Vagina (tissue), 2 donors: ENCODE measurements at regions of chr19 and their contacts with region 1.

Region 1: GRCh38 chr19:42242512-42243344 is at the start of gene GSK3A:
- DNase-seq: peak; percentile 99 to 100
- H3K4me3 ChIP-seq: peak within 1 kb of the TSS; percentile 63 to 89
- H3K27ac ChIP-seq: peak within 1 kb of the TSS; percentile 87
- H3K4me1 ChIP-seq: peaks cover 57% of the 10 kb centered on the region
- H3K27me3 ChIP-seq: no peaks in the 10 kb centered on the region
- CTCF ChIP-seq: peak in 1 of 3 experiments; percentile 5
- POLR2A ChIP-seq: peak in 1 of 2 donors; percentile 85
- total RNA-seq, gene GSK3A: 21.1 TPM

Region 2: GRCh38 chr19:42092350-42092749 is 150.4 kb before region 1 on chr19:
- intact Hi-C with region 1: no loop called
- DNase-seq: no peak
- H3K4me3 ChIP-seq: no peak overlapping the region
- H3K27ac ChIP-seq: no peak overlapping the region
- H3K4me1 ChIP-seq: peaks cover 14% of the 10 kb centered on the region
- H3K27me3 ChIP-seq: no peaks in the 10 kb centered on the region
- CTCF ChIP-seq: peak in 1 of 3 experiments; percentile 14
- POLR2A ChIP-seq: no peak

Region 3: DNA sequence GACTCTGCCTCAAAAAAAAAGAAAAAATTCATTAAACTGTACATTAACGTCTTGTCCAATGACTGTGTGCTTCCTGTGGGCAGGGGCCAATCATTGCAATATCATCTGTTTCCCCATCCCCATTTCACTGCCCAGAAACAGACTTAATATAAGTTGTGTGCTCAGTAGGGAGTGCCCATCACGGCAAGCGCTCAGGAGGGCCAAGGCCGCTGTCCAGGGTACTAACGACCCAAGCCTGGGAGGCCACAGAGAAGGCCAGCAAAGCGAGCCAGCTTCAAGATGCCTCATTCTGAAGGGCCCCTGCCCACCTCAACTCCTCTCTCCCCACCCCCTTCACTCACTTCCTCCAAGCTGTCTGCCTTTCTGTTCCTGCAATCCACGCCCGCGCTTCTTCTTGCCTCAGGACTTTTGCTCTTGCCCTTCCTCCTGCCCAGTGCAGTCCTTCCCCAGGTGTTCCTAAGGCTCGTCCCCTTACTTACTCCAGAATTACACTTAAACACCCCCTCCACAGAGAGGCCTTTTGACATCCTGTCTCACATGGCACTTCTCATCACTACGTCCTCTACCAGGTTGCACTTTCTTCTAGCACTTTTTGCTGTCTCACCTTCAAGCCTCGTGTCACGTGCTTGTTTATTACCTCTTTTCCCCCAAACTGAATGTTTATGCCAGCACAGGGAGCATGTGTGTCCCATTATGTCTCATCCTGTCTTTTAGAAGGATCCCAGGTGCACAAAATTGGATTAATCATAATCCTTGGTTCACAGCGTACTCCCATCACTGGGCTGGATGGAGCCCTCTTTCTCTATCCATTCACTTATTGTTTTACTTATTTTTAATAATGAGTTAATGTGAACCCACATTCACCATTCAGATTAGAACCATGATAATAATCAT is 99.1 kb before region 1 on chr19:
- intact Hi-C with region 1: no loop called
- DNase-seq: no peak
- H3K4me3 ChIP-seq: no peak overlapping the region
- H3K27ac ChIP-seq: no peak overlapping the region
- H3K4me1 ChIP-seq: no peaks in the 10 kb centered on the region
- H3K27me3 ChIP-seq: no peaks in the 10 kb centered on the region
- CTCF ChIP-seq: no peak
- POLR2A ChIP-seq: no peak

Region 4: GRCh38 chr19:42207767-42208271 is 34.9 kb before region 1 on chr19:
- intact Hi-C with region 1: loop called (anchors 2 kb)
- DNase-seq: no peak
- H3K4me3 ChIP-seq: no peak overlapping the region
- H3K27ac ChIP-seq: peak overlapping the region; percentile 44
- H3K4me1 ChIP-seq: peaks cover 28% of the 10 kb centered on the region
- H3K27me3 ChIP-seq: no peaks in the 10 kb centered on the region
- CTCF ChIP-seq: no peak
- POLR2A ChIP-seq: no peak

Region 5: DNA sequence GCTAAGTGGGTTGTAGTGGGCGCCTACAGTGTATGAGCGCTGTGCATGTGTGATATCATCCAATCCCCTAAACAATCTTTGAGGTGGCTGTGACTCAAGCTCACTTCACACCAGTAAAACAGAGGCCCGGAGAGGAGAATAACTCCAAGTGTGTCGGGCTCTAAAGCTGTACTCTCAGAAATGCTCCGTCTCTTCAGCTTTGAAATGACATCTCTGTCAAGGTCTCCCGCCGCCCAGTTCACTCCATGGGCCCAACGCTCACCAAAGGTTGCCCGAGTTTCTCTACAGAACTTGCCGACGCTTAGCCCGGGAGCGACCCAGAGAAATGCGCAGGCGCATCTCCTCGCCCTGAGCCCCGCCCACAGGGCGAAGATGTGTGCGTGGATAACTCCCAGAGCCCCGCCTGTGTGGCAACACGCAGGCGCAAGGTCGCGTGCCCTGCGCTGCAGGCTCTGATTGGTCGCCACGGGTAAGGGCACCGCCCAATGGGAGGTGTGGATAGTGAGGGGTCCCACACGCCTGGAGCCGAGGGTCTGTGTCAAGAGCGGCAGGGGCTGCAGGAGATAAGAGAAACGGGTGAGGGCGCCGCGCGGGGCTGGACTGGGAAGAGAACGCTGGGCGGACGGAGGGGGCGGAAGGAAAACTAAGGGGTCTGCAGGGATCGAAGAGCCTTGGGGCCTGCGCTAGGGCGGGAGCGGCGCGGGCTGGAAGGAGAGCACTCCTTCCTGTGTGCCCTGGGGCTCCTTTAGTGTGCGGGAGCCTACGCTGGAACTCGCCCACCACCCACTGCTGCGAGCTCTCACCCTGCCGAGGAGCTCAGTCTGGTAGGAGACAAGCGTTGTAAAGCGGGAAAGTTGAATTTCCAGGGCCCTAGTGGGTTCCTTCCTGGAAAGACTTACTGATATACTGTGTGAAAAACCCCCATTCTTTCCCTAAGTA is 22.6 kb before region 1 on chr19 and contains the start of gene ZNF526:
- intact Hi-C with region 1: loop called (anchors 2 kb)
- DNase-seq: peak in 1 of 2 donors; percentile 98
- H3K4me3 ChIP-seq: peak within 1 kb of the TSS; percentile 77 to 93
- H3K27ac ChIP-seq: peak within 1 kb of the TSS; percentile 90
- H3K4me1 ChIP-seq: peaks cover 65% of the 10 kb centered on the region
- H3K27me3 ChIP-seq: no peaks in the 10 kb centered on the region
- CTCF ChIP-seq: peak in 1 of 3 experiments; percentile 5
- POLR2A ChIP-seq: peak in 1 of 2 donors; percentile 76
- total RNA-seq, gene ZNF526: 6.1 TPM

Region 6: DNA sequence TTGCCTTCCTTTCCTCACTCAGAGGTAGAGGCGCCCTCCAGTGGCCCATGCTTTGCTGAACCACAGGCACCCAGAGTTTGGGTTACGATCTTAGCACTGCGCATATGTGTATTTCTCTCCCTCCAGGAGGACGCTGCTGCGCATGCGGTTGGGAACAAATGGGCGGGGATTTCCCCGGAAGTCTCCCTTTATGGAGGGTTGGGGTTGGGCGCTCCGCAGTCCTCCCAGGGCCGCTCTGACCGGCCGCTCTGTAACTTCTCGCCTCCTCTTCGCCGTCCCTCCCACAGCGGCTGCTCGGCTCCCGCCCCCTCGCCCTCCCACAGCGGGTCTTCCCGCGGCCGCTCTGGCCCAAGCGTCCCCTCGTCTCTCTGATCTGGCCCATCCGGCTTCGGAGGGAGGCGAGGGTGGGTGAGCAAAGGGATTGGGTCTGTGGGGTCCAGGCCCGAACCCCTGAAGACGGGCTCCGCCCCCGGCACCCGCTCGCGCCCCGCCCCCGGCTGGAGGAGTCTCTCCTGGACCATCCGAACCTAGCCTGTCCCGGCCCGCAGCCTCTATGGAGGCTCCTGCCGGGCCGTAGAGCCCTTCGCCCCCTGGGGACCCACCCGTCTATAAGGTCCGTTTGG is 82.7 kb after region 1 on chr19 and contains the start of gene MEGF8:
- intact Hi-C with region 1: loop called (anchors 1 kb)
- DNase-seq: peak; percentile 97 to 98
- H3K4me3 ChIP-seq: peak within 1 kb of the TSS; percentile 60 to 78
- H3K27ac ChIP-seq: peak within 1 kb of the TSS; percentile 79
- H3K4me1 ChIP-seq: peaks cover 45% of the 10 kb centered on the region
- H3K27me3 ChIP-seq: peaks cover 14% of the 10 kb centered on the region
- CTCF ChIP-seq: peak; percentile 62 to 84 (median 65)
- POLR2A ChIP-seq: no peak
- total RNA-seq, gene MEGF8: 13.5 TPM

Region 7: GRCh38 chr19:42563352-42564210 is 320.9 kb after region 1 on chr19:
- intact Hi-C with region 1: no loop called
- DNase-seq: no peak
- H3K4me3 ChIP-seq: no peak overlapping the region
- H3K27ac ChIP-seq: no peak overlapping the region
- H3K4me1 ChIP-seq: no peaks in the 10 kb centered on the region
- H3K27me3 ChIP-seq: no peaks in the 10 kb centered on the region
- CTCF ChIP-seq: peak in 1 of 3 experiments; percentile 20
- POLR2A ChIP-seq: no peak